Naive thymus-derived CD8-positive, alpha-beta T cell (primary cell): ENCODE measurements at regions of chr12 and their contacts with region 1.

Region 1: GRCh38 chr12:9673404-9674225 is 4.1 kb downstream of the CLEC2D start:
- DNase-seq: peak in 8 of 10 donors; percentile 27 to 64 (median 50)
- ATAC-seq: peak; percentile 31 to 33
- H3K4me3 Mint-ChIP-seq: peak overlapping the region; percentile 86 to 99 (median 95)
- H3K27ac Mint-ChIP-seq: peak overlapping the region; percentile 94 to 99 (median 96)
- H3K4me1 Mint-ChIP-seq: peaks cover 32 to 81% (median 63%) of the 10 kb centered on the region in 4 donors
- H3K27me3 Mint-ChIP-seq: no peaks in the 10 kb centered on the region

Region 2: GRCh38 chr12:9640024-9640423 is 33.6 kb before region 1 on chr12:
- POLR2A ChIA-PET with region 1: interaction called, 12 read pairs
- DNase-seq: no peak
- ATAC-seq: no peak
- H3K4me3 Mint-ChIP-seq: no peak overlapping the region
- H3K27ac Mint-ChIP-seq: peak overlapping the region in 1 of 10 donors; percentile 60
- H3K4me1 Mint-ChIP-seq: peaks cover 25 to 76% (median 73%) of the 10 kb centered on the region in 4 donors
- H3K27me3 Mint-ChIP-seq: no peaks in the 10 kb centered on the region

Region 3: DNA sequence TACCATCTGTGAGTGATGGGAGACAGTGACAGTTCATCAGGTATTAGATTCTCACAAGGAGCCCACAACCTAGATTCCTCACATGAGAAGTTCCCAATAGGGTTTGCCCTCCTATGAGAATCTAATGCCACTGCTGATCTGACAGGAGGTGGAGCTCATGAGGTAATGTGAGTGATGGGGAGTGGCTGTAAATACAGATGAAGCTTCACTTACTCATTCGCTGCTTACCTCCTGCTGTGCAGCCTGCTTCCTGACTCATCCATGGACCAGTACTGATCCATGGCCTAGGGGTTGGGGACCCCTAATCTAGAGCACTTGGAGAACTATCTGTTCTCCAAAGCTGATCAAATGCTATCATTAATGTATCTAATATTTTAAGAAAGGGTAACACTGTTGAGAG is 13.6 kb after region 1 on chr12:
- POLR2A ChIA-PET with region 1: interaction called, 31 read pairs
- DNase-seq: no peak
- ATAC-seq: peak; percentile 16 to 32
- H3K4me3 Mint-ChIP-seq: peak overlapping the region in 8 of 10 donors; percentile 22 to 68 (median 49)
- H3K27ac Mint-ChIP-seq: peak overlapping the region in 9 of 10 donors; percentile 74 to 91 (median 83)
- H3K4me1 Mint-ChIP-seq: peaks cover 20 to 81% (median 56%) of the 10 kb centered on the region in 4 donors
- H3K27me3 Mint-ChIP-seq: no peaks in the 10 kb centered on the region

Region 4: GRCh38 chr12:9707864-9708808 is 34.5 kb after region 1 on chr12:
- POLR2A ChIA-PET with region 1: interaction called, 25 read pairs
- DNase-seq: peak; percentile 30 to 82 (median 70)
- ATAC-seq: peak; percentile 80 to 88
- H3K4me3 Mint-ChIP-seq: peak overlapping the region; percentile 58 to 82 (median 72)
- H3K27ac Mint-ChIP-seq: peak overlapping the region; percentile 79 to 96 (median 94)
- H3K4me1 Mint-ChIP-seq: peaks cover 26 to 86% (median 70%) of the 10 kb centered on the region in 4 donors
- H3K27me3 Mint-ChIP-seq: no peaks in the 10 kb centered on the region

Region 5: GRCh38 chr12:9721394-9722092 is 47.9 kb after region 1 on chr12:
- POLR2A ChIA-PET with region 1: no interaction called
- DNase-seq: no peak
- ATAC-seq: peak in 1 of 2 donors; percentile 58
- H3K4me3 Mint-ChIP-seq: peak overlapping the region in 1 of 10 donors; percentile 43
- H3K27ac Mint-ChIP-seq: peak overlapping the region in 3 of 10 donors; percentile 41 to 71 (median 70)
- H3K4me1 Mint-ChIP-seq: peaks cover 0 to 57% (median 2%) of the 10 kb centered on the region in 4 donors
- H3K27me3 Mint-ChIP-seq: no peaks in the 10 kb centered on the region